Activated CD4-positive, alpha-beta memory T cell treated with anti-CD3 and anti-CD28 coated beads for 36 hours (primary cell): ENCODE measurements at regions of chr1 and their contacts with region 1.

Region 1: DNA sequence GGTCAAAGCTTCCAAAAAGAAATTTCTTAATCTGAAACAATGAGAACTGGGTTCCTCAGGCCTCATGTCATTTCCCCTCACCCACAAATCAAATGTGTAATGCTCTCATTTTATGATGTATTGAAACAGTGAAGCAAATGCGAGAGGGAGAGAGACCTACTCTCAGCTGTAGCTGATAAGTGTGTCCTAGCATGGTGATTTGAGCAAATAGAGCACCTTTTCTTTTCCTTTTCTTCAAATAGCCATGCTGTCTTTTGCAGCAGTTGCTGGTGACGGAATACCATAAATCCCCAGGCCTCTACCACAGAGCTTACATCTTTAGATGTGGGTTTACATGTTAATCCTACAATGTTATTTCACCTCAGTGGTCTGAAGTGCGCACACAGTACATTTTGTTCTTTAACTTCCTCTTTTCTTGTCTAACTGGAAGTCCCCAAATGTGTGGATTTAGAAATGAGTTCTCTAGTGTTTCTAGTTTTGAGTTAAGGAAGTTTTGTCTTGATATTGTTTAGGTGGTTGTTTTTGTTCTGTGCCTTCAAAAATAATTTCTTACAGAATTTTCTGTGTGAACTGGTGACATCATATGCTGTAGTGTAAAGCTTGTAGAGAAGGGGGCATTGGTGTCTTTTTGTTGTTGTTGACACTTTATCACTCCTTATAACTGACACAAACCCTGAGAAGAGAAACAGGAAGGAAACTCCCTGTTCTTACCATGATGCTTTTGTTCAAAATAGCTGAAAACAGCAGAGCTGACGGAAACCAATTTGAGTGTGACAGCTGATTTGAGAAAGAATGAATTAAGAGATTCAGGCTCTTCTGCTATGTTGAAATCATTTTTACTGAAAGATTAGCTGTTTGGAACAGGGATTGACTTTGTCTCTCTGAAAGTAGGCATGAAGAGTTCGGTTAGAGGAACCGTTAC is 12.2 kb downstream of the SMAP2 start:
- DNase-seq: peak; percentile 77
- H3K4me3 Mint-ChIP-seq: peak overlapping the region; percentile 81
- H3K27ac Mint-ChIP-seq: peak overlapping the region; percentile 100
- H3K4me1 Mint-ChIP-seq: peaks cover 90% of the 10 kb centered on the region
- H3K27me3 Mint-ChIP-seq: no peaks in the 10 kb centered on the region

Region 2: DNA sequence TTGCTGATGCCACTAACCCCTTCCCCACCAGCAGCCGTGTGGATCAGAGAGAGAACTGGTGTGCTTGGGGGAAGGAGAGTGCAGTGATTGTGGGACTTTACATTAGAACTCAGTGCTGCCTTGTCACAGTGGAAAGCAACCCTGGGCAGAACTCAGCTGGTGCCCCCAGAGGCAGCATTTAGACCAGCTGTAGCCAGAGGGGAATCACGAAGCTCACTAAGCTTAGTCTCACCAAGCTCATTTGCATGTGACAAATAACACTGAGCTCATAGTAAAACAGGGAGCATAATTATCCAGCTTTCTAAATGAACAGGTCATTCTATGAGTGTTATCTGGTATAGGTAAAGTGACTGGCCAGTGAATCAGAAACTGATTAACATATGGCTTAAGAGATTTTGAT is 22.0 kb before region 1 on chr1:
- CTCF ChIA-PET with region 1: interaction called, 9 read pairs
- POLR2A ChIA-PET with region 1: interaction called, 11 read pairs
- intact Hi-C with region 1: no loop called
- DNase-seq: peak; percentile 69
- H3K4me3 Mint-ChIP-seq: no peak overlapping the region
- H3K27ac Mint-ChIP-seq: peak overlapping the region; percentile 62
- H3K4me1 Mint-ChIP-seq: peaks cover 15% of the 10 kb centered on the region
- H3K27me3 Mint-ChIP-seq: no peaks in the 10 kb centered on the region

Region 3: GRCh38 chr1:40563266-40563665 is 177.6 kb after region 1 on chr1:
- CTCF ChIA-PET with region 1: no interaction called
- POLR2A ChIA-PET with region 1: no interaction called
- intact Hi-C with region 1: no loop called
- DNase-seq: no peak
- H3K4me3 Mint-ChIP-seq: no peak overlapping the region
- H3K27ac Mint-ChIP-seq: no peak overlapping the region
- H3K4me1 Mint-ChIP-seq: peaks cover 6% of the 10 kb centered on the region
- H3K27me3 Mint-ChIP-seq: peaks cover 5% of the 10 kb centered on the region